ENCODE measurements at regions of chr7 and their contacts with region 1.

Region 1: GRCh38 chr7:129224251-129225205 is at the start of gene AHCYL2:
- DNase-seq: peak; percentile 99
- ATAC-seq: peak; percentile 97 to 99 (median 98)
- H3K4me3 ChIP-seq: peak within 1 kb of the TSS; percentile 95
- H3K27ac ChIP-seq: peak within 1 kb of the TSS; percentile 97
- H3K4me1 ChIP-seq: peaks cover 35% of the 10 kb centered on the region
- H3K27me3 ChIP-seq: no peaks in the 10 kb centered on the region
- CTCF ChIP-seq: no peak
- total RNA-seq, gene AHCYL2: 24.8 to 39.2 (median 31.4) TPM

Region 2: GRCh38 chr7:129055294-129055816 is 169.2 kb before region 1 on chr7:
- intact Hi-C with region 1: no loop called
- DNase-seq: no peak
- ATAC-seq: peak; percentile 19 to 48 (median 43)
- H3K4me3 ChIP-seq: peak overlapping the region; percentile 99
- H3K27ac ChIP-seq: peak overlapping the region; percentile 99
- H3K4me1 ChIP-seq: peaks cover 17% of the 10 kb centered on the region
- H3K27me3 ChIP-seq: no peaks in the 10 kb centered on the region
- CTCF ChIP-seq: no peak

Region 3: GRCh38 chr7:129271500-129272355 is 47.2 kb after region 1 on chr7:
- intact Hi-C with region 1: loop called in 1 of 2 experiments (anchors 5 kb)
- DNase-seq: no peak
- ATAC-seq: peak in 3 of 4 donors; percentile 51 to 81 (median 75)
- H3K4me3 ChIP-seq: no peak overlapping the region
- H3K27ac ChIP-seq: no peak overlapping the region
- H3K4me1 ChIP-seq: peaks cover 11% of the 10 kb centered on the region
- H3K27me3 ChIP-seq: no peaks in the 10 kb centered on the region
- CTCF ChIP-seq: peak; percentile 54

Region 4: DNA sequence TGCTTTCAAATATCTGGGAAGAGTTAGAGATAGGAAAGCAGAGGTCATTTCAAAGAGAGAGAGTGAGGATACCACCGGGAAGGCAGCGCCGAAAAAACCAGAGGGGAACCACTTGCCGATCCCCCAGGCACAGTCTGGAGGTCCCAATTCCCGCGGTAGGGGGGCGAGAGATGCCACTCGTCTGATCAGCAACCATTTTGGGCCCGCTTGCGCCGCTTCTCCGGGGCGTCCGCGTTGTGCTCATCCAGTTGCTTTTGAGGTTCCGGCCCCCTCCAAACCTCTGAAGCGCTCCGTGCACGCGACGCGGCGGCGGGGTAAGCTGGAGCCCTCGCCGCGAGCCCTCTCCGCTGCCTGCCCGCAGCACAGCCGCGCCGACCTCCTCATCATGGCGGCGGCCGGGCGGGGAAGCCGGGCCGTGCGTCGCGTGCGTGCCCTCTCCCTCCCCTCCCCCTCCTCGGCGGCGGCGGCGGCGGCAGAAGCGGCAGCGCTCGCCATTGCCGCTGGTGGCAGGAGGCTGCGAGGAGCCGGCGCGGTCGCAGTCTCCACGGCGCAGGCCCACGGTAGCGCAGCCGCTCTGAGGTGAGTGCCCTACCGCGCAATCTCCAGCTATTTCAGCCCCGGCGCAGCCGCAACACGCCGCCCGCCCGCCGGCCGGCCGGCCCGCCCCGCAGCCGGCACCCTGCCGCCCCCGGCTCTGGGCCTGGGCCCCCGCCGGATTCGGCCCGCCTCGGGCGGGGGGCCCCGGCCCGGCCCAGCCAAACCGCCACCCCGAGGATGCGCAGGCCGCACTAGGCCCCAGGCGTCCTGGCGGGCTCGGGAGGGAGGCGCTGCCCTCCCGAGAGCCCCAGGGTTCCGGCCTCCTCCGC is 387.0 kb after region 1 on chr7 and contains the start of gene NRF1:
- intact Hi-C with region 1: loop called in 1 of 2 experiments (anchors 10 kb)
- DNase-seq: peak; percentile 92 to 96
- ATAC-seq: peak; percentile 96 to 99 (median 97)
- H3K4me3 ChIP-seq: peak within 1 kb of the TSS; percentile 96
- H3K27ac ChIP-seq: peak within 1 kb of the TSS; percentile 97
- H3K4me1 ChIP-seq: peaks cover 27% of the 10 kb centered on the region
- H3K27me3 ChIP-seq: no peaks in the 10 kb centered on the region
- CTCF ChIP-seq: peak; percentile 23
- total RNA-seq, gene NRF1: 10.0 to 13.7 (median 10.7) TPM

Measured in psoas muscle (tissue), 8 donors.